Activated naive CD4-positive, alpha-beta T cell treated with anti-CD3 and anti-CD28 coated beads for 36 hours (primary cell): ENCODE measurements at regions of chr15 and their contacts with region 1.

Region 1: DNA sequence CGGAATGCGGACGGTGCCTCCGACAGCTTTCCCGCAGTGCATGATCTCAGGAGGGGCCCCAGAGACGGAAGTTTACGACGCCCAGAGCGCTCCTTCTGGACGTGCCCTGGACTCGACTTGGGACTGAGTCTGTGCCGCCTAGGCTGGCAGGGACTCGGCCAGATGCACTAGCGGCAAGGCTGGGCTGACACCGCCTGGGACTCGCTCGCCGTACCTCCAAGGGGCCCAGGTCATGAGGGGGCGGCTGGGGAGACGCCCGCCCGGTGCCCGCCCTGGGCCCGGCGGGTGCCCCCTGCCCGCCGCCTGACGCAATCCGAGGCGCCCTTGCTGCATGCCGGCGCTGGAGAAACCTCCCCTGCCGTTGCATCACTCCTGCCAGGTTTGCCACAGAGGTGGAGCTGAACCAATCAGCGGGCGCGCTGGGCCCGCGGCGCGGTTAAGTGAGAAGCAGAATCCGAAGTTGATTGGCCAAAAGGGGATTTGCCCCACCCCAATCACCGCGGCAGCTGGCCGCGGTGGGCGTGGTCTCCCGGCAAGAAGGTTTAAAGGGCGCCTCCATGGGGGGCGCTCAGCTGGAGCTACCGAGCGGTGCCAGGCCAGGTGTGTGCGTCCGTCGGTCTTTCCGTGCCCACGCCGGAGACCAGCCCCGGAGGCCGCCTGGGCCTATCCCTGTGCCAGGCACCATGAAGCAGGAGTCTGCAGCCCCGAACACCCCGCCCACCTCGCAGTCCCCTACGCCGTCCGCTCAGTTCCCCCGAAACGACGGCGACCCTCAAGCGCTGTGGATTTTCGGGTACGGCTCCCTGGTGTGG is at the start of gene CHAC1:
- DNase-seq: peak; percentile 99
- H3K4me3 Mint-ChIP-seq: peak within 1 kb of the TSS; percentile 94
- H3K27ac Mint-ChIP-seq: peak within 1 kb of the TSS; percentile 93
- H3K4me1 Mint-ChIP-seq: peaks cover 35% of the 10 kb centered on the region
- H3K27me3 Mint-ChIP-seq: no peaks in the 10 kb centered on the region
- total RNA-seq, gene CHAC1: 19.8 to 20.2 TPM

Region 2: GRCh38 chr15:40941528-40942336 is 11.4 kb before region 1 on chr15:
- CTCF ChIA-PET with region 1: interaction called, 50 read pairs
- intact Hi-C with region 1: loop called (anchors 1 kb)
- DNase-seq: peak; percentile 80
- H3K4me3 Mint-ChIP-seq: peak overlapping the region; percentile 82
- H3K27ac Mint-ChIP-seq: peak overlapping the region; percentile 78
- H3K4me1 Mint-ChIP-seq: peaks cover 32% of the 10 kb centered on the region
- H3K27me3 Mint-ChIP-seq: no peaks in the 10 kb centered on the region

Region 3: GRCh38 chr15:41061667-41062066 is 108.6 kb after region 1 on chr15:
- CTCF ChIA-PET with region 1: no interaction called
- intact Hi-C with region 1: no loop called
- DNase-seq: no peak
- H3K4me3 Mint-ChIP-seq: no peak overlapping the region
- H3K27ac Mint-ChIP-seq: no peak overlapping the region
- H3K4me1 Mint-ChIP-seq: no peaks in the 10 kb centered on the region
- H3K27me3 Mint-ChIP-seq: no peaks in the 10 kb centered on the region

Region 4: DNA sequence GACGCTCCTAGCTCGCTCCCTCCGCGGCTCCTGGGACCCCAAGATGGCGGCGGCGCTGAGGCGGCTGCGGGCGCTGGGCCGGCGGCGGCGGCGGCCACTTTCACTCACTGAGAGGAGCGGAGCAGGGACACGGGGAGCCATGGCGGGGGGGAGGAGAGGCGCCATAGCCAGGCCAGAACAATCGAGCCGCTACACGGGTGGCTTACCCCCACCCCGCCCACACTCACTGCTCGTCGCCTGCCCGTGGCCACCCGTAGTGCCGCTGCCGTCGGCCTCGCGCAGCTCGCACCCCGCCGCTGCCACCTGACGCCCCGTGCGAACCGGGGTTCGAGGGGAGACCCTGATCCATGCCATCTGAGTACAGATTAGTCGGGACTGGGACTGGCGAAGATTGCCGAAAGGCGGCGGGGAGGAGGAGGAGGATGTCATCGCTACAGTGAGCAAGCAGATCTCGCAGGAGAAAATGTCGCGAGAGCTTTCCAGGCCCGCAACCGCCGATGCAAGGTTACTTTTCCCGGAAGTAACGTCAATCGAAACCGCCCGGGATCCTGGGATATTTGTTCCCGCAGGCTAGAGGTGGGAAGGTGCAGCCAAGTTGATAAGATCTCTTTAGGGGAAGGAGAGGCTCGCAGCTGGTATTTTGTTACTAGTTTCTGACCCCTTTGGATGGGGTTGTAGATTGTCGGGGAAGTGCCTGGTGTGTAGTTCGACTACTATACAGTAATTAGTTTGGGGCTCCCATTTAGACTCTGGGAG is 163.2 kb after region 1 on chr15 and contains the start of gene INO80:
- CTCF ChIA-PET with region 1: no interaction called
- intact Hi-C with region 1: loop called (anchors 2 kb)
- DNase-seq: peak; percentile 99
- H3K4me3 Mint-ChIP-seq: peak within 1 kb of the TSS; percentile 88
- H3K27ac Mint-ChIP-seq: peak within 1 kb of the TSS; percentile 96
- H3K4me1 Mint-ChIP-seq: peaks cover 21% of the 10 kb centered on the region
- H3K27me3 Mint-ChIP-seq: no peaks in the 10 kb centered on the region
- total RNA-seq, gene INO80: 14.0 to 16.8 TPM

Region 5: DNA sequence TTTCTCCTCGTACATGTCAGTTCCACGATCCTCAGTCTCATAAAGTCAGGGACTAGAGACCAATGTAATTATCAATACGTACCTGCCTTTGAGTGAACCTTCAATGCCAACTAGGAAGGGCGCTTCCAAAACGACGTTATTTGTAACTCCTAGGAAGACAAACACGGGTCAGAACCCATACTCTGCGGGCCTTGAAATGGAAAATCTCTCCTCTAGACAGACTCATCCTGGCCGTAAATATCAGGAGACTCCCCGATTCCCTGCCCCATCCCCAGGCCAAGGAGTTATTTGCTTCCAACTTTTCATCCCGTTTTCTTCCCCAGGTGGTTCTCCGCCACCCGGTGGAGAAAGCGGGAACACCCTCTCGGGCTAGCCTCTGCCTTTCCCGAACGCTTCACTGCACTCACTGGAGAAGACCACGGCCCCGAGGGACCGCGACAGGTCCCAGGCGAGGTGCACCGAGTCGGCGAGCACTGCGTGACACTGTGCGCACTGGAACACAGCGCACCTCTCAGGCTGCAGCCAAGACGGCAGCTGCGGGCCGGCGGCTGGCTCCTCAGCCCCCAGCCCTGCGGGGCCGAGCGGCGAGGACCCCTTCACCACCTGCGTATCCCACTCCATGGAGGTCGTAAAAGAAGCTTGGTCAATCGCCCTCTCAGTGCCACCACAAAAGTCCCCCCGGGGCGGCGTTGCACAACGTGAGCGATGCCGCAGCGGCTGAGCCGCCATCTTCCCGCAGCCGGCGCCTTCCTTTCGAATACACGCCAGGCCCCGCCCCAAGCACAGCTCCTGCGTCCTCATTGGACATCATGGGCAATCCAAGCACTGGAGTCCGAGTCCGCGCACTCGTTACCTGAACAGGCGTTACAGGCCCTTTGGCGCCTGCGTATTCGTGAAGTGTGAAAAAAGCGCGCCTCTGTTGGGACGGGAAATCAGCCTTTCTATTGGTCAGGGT is 379.0 kb after region 1 on chr15 and contains the start of gene OIP5:
- CTCF ChIA-PET with region 1: no interaction called
- intact Hi-C with region 1: loop called (anchors 1 kb)
- DNase-seq: peak; percentile 100
- H3K4me3 Mint-ChIP-seq: peak within 1 kb of the TSS; percentile 100
- H3K27ac Mint-ChIP-seq: peak within 1 kb of the TSS; percentile 98
- H3K4me1 Mint-ChIP-seq: peaks cover 26% of the 10 kb centered on the region
- H3K27me3 Mint-ChIP-seq: no peaks in the 10 kb centered on the region
- total RNA-seq, gene OIP5: 9.5 to 10.7 TPM